PC-9 (cell line): ENCODE measurements at regions of chr2 and their contacts with region 1.

Region 1: DNA sequence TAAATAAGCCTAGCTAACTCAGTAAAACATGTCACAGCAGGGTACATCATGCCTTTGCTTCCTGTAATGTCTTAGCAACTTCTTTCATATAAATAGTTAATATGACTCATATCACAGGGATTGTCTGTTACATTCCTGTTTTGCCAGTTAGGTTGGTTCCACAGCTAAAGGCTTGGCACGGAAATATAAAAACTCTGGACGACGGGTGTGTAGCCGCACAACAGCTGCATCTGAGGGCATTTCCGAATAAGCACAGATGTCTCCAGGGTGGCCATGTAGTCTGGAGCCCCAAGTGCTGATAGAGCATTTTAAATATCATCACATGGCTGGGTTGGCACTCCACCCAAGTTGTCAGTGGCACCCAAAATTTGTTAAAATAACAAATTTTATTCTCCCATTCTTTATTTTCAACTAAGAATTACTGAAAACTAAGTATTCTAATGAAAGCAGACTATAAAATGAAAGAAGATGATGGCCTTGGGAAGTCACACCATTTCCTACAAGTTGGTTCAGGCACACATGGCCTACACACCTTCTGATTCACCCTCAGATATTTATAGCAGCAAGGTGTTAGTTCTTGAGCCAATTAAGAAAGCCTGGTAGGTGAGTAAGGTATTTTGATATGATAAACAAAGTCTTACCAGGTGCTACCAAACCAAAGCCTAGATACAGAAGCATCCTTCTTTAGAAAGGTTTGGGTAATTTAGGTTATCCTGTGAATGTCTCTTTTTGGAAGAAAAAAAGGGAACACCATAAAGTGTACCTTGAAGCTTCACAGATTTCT is 61.8 kb upstream of the STK17B start:
- DNase-seq: peak; percentile 51 to 90
- H3K4me3 ChIP-seq: peak overlapping the region; percentile 23; the same call in 1 of the 2 replicates
- H3K27ac ChIP-seq: peak overlapping the region; percentile 92
- H3K4me1 ChIP-seq: peaks cover 37% of the 10 kb centered on the region
- H3K27me3 ChIP-seq: no peaks in the 10 kb centered on the region
- CTCF ChIP-seq: no peak

Region 2: DNA sequence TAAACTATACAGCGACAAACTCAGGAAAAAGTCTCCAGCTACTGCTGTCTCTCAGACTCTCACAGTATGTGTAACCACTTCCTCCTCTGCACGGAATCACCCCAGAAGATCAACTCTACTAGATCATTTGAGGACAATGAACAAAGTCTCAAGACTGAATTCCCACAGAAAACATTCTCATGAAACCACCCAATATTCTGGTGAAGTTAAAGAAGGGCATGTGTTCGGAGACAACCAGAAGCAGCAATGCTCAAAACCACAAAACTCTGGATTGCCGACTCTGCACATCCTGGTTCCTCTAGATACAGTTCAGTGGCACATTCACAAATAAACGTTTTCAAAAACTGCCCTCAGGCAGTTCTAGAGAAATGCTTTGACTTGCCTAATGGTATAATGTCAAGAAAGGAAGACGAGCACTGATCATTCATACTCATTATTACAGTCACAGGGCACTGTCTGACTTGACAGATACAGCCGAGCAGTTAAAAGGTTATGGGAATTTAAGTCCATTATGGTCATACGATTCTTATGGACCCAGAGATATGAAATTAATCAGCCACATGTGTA is 30.1 kb after region 1 on chr2:
- CTCF ChIA-PET with region 1: no interaction called
- POLR2A ChIA-PET with region 1: no interaction called
- intact Hi-C with region 1: loop called (anchors 1 kb)
- DNase-seq: peak in 1 of 2 experiments; percentile 43
- H3K4me3 ChIP-seq: no peak overlapping the region
- H3K27ac ChIP-seq: no peak overlapping the region
- H3K4me1 ChIP-seq: peaks cover 25% of the 10 kb centered on the region
- H3K27me3 ChIP-seq: no peaks in the 10 kb centered on the region
- CTCF ChIP-seq: no peak